ENCODE measurements at regions of chr3 and their contacts with region 1.

Region 1: DNA sequence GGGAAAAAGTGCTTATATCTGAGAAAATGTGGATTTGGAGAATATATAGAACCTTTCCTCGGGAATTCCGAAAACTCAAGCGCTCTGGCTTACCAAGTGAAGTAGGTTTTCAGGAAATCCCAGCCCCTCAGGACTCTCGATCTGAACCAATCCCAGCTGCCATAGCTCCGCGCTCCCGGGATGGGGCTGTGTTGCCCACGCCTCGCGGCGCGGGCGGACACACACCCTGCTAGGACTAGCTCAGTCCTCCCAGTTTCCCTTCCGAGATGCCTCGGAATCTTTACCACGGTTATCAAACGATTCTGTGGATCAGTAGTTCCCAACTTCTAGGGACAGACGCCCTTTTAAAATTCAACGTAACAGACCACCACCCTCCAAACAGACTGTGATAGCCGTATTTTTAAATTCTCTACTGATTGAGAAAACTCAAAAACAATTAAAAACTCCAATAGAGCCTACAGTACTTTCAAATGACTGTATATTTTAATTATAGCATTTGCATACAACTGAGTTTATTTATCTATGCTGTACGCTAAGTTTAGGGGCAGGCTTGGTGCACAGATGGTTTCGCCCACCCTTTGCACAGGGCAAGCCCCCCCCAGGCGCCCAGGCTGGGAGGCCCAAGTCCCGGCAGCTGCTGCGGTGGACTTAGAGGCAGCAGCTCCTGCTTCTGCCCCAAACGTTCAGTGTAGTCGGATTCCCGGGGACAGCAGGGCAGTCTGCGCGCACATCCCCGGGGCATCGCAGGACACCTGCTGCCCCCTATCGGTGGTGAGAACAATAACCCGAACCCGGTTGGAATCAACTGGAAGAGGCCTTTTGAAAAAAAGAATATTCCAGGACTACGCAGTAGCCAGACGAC is 52.3 kb downstream of the CCDC54 start:
- DNase-seq: peak; percentile 88

Region 2: GRCh38 chr3:107206141-107206540 is 223.4 kb before region 1 on chr3:
- intact Hi-C with region 1: loop called (anchors 2 kb)
- DNase-seq: no peak

Region 3: DNA sequence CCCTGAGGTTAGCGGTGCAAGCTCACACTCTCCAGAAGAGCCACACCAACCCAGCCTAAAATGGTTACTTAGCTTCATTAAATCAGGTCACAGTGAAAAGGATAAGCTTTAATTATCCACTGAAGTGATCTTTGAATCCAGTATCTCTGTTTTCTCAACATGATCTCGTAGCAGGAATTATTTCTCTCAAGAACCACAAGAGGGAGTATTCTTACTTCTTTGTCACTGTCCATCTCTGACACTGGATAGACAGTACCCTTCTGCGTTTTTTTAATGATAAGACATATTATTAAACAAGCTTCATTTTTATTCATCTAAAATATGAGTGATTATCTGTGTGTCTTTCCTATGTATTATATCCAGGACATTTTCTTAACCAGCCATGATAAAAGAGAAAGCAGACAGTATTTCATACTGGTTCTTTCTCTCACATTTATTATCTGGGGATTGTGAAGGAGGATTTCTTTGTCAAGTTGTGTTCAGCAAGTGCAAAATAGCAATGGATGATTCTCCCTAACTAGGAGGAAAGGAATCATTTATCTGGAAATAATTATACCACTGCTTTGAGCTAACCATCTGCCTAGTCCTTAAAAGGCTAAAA is 157.7 kb before region 1 on chr3:
- intact Hi-C with region 1: loop called (anchors 5 kb)
- DNase-seq: no peak

Region 4: DNA sequence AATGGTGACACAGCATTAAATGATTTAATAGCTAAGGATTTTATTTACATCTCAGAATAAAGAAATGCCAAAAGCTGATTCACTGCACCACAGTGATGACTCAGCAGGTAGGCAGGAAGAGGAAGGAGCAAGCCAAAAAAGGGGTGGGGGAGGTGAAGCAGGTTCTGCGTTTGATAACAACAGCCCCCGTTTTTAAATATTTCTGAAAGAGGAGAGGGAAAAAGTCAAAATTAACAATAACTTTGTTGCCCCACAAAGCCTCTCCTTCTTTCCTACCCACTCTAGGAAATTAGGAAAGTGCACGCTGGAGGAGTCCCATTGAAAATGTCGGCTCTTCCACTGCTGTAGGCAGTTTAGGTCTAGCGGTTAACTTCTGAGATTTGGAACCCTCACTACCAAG is 62.2 kb before region 1 on chr3:
- intact Hi-C with region 1: no loop called
- DNase-seq: no peak

Region 5: GRCh38 chr3:107392549-107393165 is 36.9 kb before region 1 on chr3:
- intact Hi-C with region 1: no loop called
- DNase-seq: no peak

Region 6: DNA sequence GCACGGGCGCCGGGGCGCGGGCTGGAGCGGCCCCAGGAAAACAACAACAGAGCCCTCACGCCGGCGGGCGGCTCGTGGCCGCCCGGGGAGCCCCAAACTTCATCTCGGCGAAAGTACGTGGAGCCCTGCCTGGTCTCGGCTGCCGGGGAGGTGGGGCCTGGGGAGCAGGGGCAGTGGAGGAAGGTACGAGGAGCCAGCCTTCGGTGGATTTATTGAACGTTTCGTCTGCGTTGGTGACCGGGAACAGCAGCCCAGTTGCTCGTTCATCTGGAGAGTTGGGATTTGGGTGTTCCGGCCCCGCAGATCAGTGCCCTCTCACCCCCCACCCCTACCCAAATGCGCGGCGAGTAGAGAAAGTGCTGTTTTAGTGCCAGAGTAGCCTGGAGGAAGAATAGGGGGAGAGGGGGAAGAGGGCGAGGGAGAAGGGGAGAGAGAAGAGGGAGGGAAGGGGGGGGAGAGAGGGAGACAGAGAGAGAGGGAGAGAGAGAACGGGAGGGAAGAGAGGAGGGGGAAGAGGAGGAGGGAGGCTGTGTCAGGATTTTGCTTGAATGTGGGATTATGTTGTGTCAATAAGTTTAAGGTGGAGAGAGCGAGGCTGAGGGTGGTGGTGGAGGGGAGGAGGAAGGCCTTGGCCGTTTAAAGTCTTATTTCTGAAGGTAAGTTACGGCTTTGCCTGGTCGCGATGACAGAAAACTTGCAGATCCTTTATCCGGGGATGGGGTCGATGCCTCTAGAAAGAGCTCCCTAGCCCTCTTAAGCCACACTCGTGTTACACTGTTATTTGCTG is 94.2 kb after region 1 on chr3:
- intact Hi-C with region 1: loop called (anchors 1 kb)
- DNase-seq: peak; percentile 82

Region 7: GRCh38 chr3:107598926-107599771 is 169.6 kb after region 1 on chr3:
- intact Hi-C with region 1: loop called (anchors 2 kb)
- DNase-seq: no peak

Region 8: DNA sequence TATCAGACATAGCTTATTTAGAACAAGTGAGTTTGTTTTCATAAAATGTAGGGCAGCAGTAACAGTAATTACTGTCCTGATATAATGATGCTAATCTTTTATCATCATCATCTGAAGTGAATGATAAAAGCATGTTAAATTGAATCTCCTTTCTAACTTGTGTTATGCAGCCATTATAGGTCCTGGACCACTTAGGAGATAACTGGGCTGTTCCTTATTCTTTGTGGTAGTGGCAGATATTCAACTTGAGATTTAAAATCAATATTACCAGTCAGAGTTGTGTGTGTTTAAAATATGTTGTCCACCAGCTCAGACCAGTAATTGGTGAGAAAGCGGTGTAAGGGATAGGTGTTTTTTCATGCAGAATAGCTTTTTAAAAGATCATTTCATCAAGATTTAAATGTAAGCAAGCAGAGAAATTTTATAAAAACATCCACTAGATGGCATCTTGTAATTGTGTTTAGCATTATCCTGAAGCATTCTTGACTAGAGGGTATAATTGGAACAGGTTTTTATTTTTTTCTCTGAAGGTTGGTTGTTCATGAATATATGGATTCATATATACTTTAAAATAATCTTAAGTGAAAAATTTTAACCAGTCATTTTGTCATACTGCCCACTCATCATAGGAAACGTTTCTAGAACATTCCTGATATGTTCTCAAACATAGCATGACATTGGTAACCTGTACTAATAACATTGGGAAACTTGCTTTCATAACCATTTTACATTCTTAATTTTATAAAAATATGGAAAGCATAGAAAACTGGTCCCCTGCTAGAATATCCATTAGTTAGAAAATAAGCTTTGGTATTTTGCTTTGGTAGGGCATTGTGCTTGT is 247.1 kb after region 1 on chr3:
- intact Hi-C with region 1: loop called (anchors 10 kb)
- DNase-seq: no peak

Region 9: DNA sequence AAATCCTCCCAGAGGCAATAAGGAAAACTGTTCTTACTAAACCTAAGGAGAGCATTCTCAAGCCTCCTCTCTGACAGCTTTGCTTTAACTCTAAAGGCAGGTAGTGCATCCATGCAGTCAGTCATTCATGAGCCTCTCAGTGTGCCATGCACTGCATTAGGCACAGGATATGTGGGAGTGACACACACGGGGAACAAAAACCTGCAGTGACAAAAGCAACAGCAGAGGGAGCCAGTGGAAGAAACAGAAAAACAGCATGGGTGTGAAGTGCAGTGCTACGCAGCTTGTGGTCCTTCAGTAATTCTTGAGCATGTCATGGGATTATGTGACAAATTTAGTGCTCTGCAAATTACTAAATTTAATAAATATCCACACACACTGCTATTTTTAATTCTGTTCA is 323.9 kb after region 1 on chr3:
- intact Hi-C with region 1: no loop called
- DNase-seq: no peak